WTC11 (cell line): ENCODE measurements at regions of chr19 and their contacts with region 1.

Region 1: DNA sequence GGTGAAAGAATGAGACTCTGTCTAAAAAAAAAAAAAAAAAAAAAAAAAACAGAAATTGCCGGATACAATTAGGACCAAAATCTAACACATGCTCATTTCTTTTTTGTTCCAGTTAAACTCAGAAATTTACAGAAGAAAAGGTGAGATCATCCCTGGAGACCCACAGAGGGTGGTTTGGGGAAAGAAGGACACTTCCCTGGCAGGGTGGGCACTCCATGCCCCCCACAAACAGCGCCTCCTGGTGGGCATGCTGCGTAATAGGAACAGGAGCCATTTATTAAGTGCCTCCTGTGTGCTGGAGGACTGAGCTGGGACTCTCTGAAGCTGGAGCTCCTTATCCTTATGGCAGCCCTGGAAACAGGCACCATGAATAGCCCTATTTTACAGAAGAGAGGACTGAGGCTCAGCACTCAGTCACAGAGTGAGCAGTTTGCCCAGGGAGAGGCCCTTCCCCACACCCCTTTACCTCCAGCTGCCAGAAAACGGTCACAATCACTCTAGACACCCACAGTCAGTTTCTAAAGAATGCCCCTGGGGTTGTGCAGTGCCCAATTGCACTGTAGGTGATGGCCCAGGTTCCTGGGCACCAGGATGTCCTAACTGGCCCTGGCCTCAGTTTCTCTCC is 10.1 kb downstream of the C19orf38 start:
- DNase-seq: peak; percentile 64
- ATAC-seq: peak; percentile 63
- H3K4me3 Mint-ChIP-seq: no peak overlapping the region
- H3K27ac Mint-ChIP-seq: no peak overlapping the region
- H3K4me1 Mint-ChIP-seq: no peaks in the 10 kb centered on the region
- H3K27me3 Mint-ChIP-seq: peaks cover 2% of the 10 kb centered on the region; the same call in 1 of the 2 replicates
- CTCF ChIP-seq: peak; percentile 95

Region 2: GRCh38 chr19:10762656-10763055 is 95.7 kb before region 1 on chr19:
- CTCF ChIA-PET with region 1: interaction called, 11 read pairs
- POLR2A ChIA-PET with region 1: no interaction called
- DNase-seq: no peak
- ATAC-seq: peak; percentile 49; the same call in 1 of the 2 replicates
- H3K4me3 Mint-ChIP-seq: no peak overlapping the region
- H3K27ac Mint-ChIP-seq: 0 out of 2 replicates have a peak overlapping the region, but pooled peaks have one; percentile 32
- H3K4me1 Mint-ChIP-seq: peaks cover 27% of the 10 kb centered on the region
- H3K27me3 Mint-ChIP-seq: no peaks in the 10 kb centered on the region
- CTCF ChIP-seq: no peak

Region 3: GRCh38 chr19:10828981-10829821 is 29.1 kb before region 1 on chr19:
- CTCF ChIA-PET with region 1: interaction called, 135 read pairs
- POLR2A ChIA-PET with region 1: no interaction called
- DNase-seq: peak; percentile 56
- ATAC-seq: peak; percentile 70
- H3K4me3 Mint-ChIP-seq: no peak overlapping the region
- H3K27ac Mint-ChIP-seq: no peak overlapping the region; the same call in 1 of the 2 replicates
- H3K4me1 Mint-ChIP-seq: no peaks in the 10 kb centered on the region
- H3K27me3 Mint-ChIP-seq: no peaks in the 10 kb centered on the region
- CTCF ChIP-seq: no peak

Region 4: DNA sequence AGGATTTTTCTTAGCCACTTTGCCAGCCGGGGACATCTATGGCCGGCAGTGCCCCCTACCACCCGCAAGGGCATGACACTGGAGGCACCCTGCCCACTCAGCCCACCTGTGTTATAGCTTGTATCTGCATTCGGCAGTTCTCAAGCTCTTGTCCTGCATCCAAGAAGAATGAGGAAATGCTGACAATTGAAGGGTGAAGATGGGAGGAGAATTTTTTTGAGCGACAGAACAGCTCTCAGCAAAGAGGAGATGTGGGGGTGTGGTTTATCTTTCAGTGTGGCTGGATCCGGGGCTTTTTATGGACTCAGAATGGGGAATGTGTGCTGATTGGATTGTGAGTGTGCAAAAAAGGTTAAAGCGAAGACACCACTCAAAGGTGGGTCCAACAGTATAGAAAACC is 15.5 kb before region 1 on chr19:
- CTCF ChIA-PET with region 1: interaction called, 135 read pairs
- POLR2A ChIA-PET with region 1: no interaction called
- DNase-seq: no peak
- ATAC-seq: no peak
- H3K4me3 Mint-ChIP-seq: no peak overlapping the region
- H3K27ac Mint-ChIP-seq: no peak overlapping the region
- H3K4me1 Mint-ChIP-seq: peaks cover 4% of the 10 kb centered on the region; the same call in 1 of the 2 replicates
- H3K27me3 Mint-ChIP-seq: peaks cover 23% of the 10 kb centered on the region
- CTCF ChIP-seq: no peak

Region 5: GRCh38 chr19:10884274-10884673 is 26.0 kb after region 1 on chr19:
- CTCF ChIA-PET with region 1: interaction called, 37 read pairs
- POLR2A ChIA-PET with region 1: no interaction called
- DNase-seq: no peak
- ATAC-seq: no peak
- H3K4me3 Mint-ChIP-seq: no peak overlapping the region
- H3K27ac Mint-ChIP-seq: no peak overlapping the region
- H3K4me1 Mint-ChIP-seq: peaks cover 73% of the 10 kb centered on the region
- H3K27me3 Mint-ChIP-seq: no peaks in the 10 kb centered on the region
- CTCF ChIP-seq: no peak